T-cell (primary cell): ENCODE measurements at regions of chr12 and their contacts with region 1.

Region 1: GRCh38 chr12:19454837-19455236 is 15.5 kb downstream of the AEBP2 start:
- DNase-seq: no peak
- ATAC-seq: no peak
- H3K4me3 ChIP-seq: no peak overlapping the region
- H3K4me3 Mint-ChIP-seq: peak overlapping the region in 1 of 3 donors; percentile 49
- H3K27ac ChIP-seq: no peak overlapping the region
- H3K27ac Mint-ChIP-seq: peak overlapping the region in 1 of 2 donors; percentile 48
- H3K4me1 ChIP-seq: peaks cover 8 to 36% of the 10 kb centered on the region in 2 experiments
- H3K4me1 Mint-ChIP-seq: peaks cover 79 to 85% (median 81%) of the 10 kb centered on the region in 3 donors
- H3K27me3 ChIP-seq: no peaks in the 10 kb centered on the region
- H3K27me3 Mint-ChIP-seq: no peaks in the 10 kb centered on the region

Region 2: DNA sequence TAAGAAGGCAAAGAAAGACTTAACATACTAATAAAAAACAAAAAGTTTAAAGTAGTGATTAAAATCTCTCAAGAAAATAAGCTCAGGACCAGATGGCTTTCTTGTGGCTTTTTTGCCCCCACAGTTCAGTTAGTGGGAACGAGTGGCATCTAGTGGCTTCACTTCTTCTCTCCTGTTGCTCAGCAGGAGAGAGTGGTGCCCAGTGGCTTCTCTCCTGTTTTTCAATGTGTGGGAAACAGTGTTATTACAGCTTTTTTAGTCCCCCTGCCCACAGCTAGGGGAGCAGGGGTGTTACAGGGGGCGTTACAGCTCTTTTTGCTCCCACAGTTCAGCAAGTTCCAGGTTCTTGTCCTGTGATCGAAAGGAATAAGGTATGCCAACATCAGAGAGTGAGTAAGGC is 1500.0 kb before region 1 on chr12:
- CTCF ChIA-PET with region 1: no interaction called
- POLR2A ChIA-PET with region 1: no interaction called
- DNase-seq: no peak
- ATAC-seq: no peak
- H3K4me3 ChIP-seq: no peak overlapping the region
- H3K4me3 Mint-ChIP-seq: no peak overlapping the region
- H3K27ac ChIP-seq: no peak overlapping the region
- H3K27ac Mint-ChIP-seq: no peak overlapping the region
- H3K4me1 ChIP-seq: no peaks in the 10 kb centered on the region
- H3K4me1 Mint-ChIP-seq: no peaks in the 10 kb centered on the region
- H3K27me3 ChIP-seq: no peaks in the 10 kb centered on the region
- H3K27me3 Mint-ChIP-seq: no peaks in the 10 kb centered on the region

Region 3: GRCh38 chr12:19480459-19480858 is 25.6 kb after region 1 on chr12:
- CTCF ChIA-PET with region 1: no interaction called
- POLR2A ChIA-PET with region 1: interaction called in 1 of 2 experiments, 11 read pairs
- DNase-seq: no peak
- ATAC-seq: no peak
- H3K4me3 ChIP-seq: no peak overlapping the region
- H3K4me3 Mint-ChIP-seq: no peak overlapping the region
- H3K27ac ChIP-seq: no peak overlapping the region
- H3K27ac Mint-ChIP-seq: no peak overlapping the region
- H3K4me1 ChIP-seq: peaks cover 20 to 32% of the 10 kb centered on the region in 2 experiments
- H3K4me1 Mint-ChIP-seq: peaks cover 72 to 79% (median 72%) of the 10 kb centered on the region in 3 donors
- H3K27me3 ChIP-seq: no peaks in the 10 kb centered on the region
- H3K27me3 Mint-ChIP-seq: no peaks in the 10 kb centered on the region